Naive thymus-derived CD4-positive, alpha-beta T cell (primary cell): ENCODE measurements at regions of chr14 and their contacts with region 1.

Region 1: DNA sequence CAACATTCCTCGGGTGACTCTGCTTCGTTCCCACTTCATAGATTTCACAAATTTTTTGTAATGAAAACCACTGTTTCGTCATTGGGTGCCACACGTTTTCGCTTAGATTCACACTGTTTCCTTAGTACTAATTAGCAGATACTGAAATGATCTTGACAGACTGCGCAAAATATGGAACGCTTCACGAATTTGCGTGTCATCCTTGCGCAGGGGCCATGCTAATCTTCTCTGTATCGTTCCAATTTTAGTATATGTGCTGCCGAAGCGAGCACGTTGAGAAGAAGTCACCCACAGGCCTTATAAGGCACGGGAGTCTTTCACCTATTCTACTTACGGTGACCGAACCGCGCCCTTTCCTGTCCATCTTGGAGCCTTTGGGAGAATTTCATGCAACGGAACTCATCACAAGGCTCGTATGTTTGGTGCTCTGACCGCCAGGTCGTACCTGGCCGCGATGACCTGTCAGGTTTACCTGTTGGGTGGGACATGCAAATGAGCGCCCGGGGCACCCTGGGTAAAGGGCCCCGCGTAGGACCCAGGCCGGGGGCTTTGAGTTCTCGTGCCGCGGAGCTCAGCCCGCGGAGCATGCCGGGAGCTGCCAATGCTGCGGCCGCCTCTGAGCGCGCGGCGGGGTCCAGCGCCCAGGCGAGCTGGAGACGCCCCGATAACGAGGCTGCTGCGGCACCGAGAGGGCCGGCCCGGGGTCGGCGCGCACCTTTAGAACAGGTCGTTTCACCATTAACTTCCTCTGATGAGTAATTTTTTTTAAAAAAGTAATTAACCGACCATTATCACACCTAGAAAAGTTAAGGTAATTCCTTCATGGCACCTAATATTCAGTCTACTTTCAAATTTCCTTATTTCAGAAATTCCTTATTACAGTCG is at the start of gene RNU6-8:
- DNase-seq: peak; percentile 79 to 96 (median 93)
- ATAC-seq: peak; percentile 91
- H3K4me3 ChIP-seq: peak within 1 kb of the TSS; percentile 85
- H3K4me3 Mint-ChIP-seq: peak within 1 kb of the TSS; percentile 91 to 98 (median 94)
- H3K27ac ChIP-seq: peak within 1 kb of the TSS; percentile 92
- H3K27ac Mint-ChIP-seq: peak within 1 kb of the TSS; percentile 96 to 100 (median 100)
- H3K4me1 ChIP-seq: peaks cover 0 to 9% of the 10 kb centered on the region in 2 donors
- H3K4me1 Mint-ChIP-seq: peaks cover 2 to 46% (median 21%) of the 10 kb centered on the region in 7 donors
- H3K27me3 ChIP-seq: no peaks in the 10 kb centered on the region
- H3K27me3 Mint-ChIP-seq: peaks cover 0 to 30% (median 0%) of the 10 kb centered on the region in 5 donors
- total RNA-seq, gene RNU6-8: not detected

Region 2: GRCh38 chr14:30621940-30622830 is 1581.1 kb before region 1 on chr14 and contains the start of gene SCFD1:
- CTCF ChIA-PET with region 1: no interaction called
- POLR2A ChIA-PET with region 1: no interaction called
- intact Hi-C with region 1: loop called in 1 of 2 experiments (anchors 1 kb)
- DNase-seq: peak; percentile 86 to 94 (median 91)
- ATAC-seq: peak; percentile 99
- H3K4me3 ChIP-seq: peak within 1 kb of the TSS; percentile 97
- H3K4me3 Mint-ChIP-seq: peak within 1 kb of the TSS; percentile 95 to 100 (median 97)
- H3K27ac ChIP-seq: peak within 1 kb of the TSS; percentile 86
- H3K27ac Mint-ChIP-seq: peak within 1 kb of the TSS; percentile 86 to 98 (median 95)
- H3K4me1 ChIP-seq: peaks cover 14 to 26% of the 10 kb centered on the region in 2 donors
- H3K4me1 Mint-ChIP-seq: peaks cover 14 to 58% (median 44%) of the 10 kb centered on the region in 7 donors
- H3K27me3 ChIP-seq: no peaks in the 10 kb centered on the region
- H3K27me3 Mint-ChIP-seq: no peaks in the 10 kb centered on the region
- total RNA-seq, gene SCFD1: 63.2 to 75.4 (median 68.2) TPM

Region 3: DNA sequence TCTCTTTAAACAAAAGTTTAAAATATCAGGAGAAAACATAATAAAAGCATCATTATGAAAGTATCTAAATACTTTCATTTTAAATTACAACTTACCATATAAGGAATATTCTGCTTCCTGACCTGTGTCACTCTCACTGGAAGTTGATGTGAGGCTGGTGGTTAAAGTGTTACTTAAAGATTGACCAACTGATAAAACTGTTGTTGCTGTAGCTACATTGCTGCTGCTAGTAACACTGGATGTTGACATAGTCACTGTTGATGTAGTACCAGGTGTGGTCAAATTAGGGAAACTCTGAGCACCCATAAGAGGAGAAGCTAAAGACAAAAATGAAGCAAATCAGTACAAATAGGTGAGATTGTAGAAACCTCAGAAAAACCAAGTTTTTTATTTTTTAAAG is 1075.5 kb before region 1 on chr14:
- CTCF ChIA-PET with region 1: no interaction called
- POLR2A ChIA-PET with region 1: no interaction called
- intact Hi-C with region 1: loop called in 1 of 2 experiments (anchors 5 kb)
- DNase-seq: peak in 5 of 9 donors; percentile 2 to 42 (median 27)
- ATAC-seq: peak; percentile 91
- H3K4me3 ChIP-seq: no peak overlapping the region
- H3K4me3 Mint-ChIP-seq: peak overlapping the region in 3 of 10 donors; percentile 7 to 67 (median 18)
- H3K27ac ChIP-seq: no peak overlapping the region
- H3K27ac Mint-ChIP-seq: peak overlapping the region in 5 of 9 donors; percentile 11 to 75 (median 52)
- H3K4me1 ChIP-seq: peaks cover 9 to 30% of the 10 kb centered on the region in 2 donors
- H3K4me1 Mint-ChIP-seq: peaks cover 16 to 47% (median 39%) of the 10 kb centered on the region in 7 donors
- H3K27me3 ChIP-seq: no peaks in the 10 kb centered on the region
- H3K27me3 Mint-ChIP-seq: peaks cover 0 to 2% (median 0%) of the 10 kb centered on the region in 5 donors

Region 4: GRCh38 chr14:31456841-31457664 is 746.2 kb before region 1 on chr14 and contains the start of gene DTD2:
- CTCF ChIA-PET with region 1: interaction called, 3 read pairs
- POLR2A ChIA-PET with region 1: interaction called, 6 read pairs
- intact Hi-C with region 1: loop called (anchors 1 kb)
- DNase-seq: peak; percentile 80 to 89 (median 86)
- ATAC-seq: peak; percentile 99
- H3K4me3 ChIP-seq: peak within 1 kb of the TSS; percentile 82
- H3K4me3 Mint-ChIP-seq: peak within 1 kb of the TSS; percentile 92 to 98 (median 96)
- H3K27ac ChIP-seq: peak within 1 kb of the TSS; percentile 77
- H3K27ac Mint-ChIP-seq: peak within 1 kb of the TSS; percentile 89 to 98 (median 95)
- H3K4me1 ChIP-seq: peaks cover 6% of the 10 kb centered on the region in 2 donors
- H3K4me1 Mint-ChIP-seq: peaks cover 14 to 48% (median 40%) of the 10 kb centered on the region in 7 donors
- H3K27me3 ChIP-seq: no peaks in the 10 kb centered on the region
- H3K27me3 Mint-ChIP-seq: peaks cover 0 to 5% (median 0%) of the 10 kb centered on the region in 5 donors
- total RNA-seq, gene DTD2: 13.4 to 20.2 (median 18.6) TPM

Region 5: GRCh38 chr14:31926123-31926522 is 277.1 kb before region 1 on chr14:
- CTCF ChIA-PET with region 1: interaction called, 3 read pairs
- POLR2A ChIA-PET with region 1: interaction called, 5 read pairs
- intact Hi-C with region 1: loop called in 1 of 2 experiments (anchors 2 kb)
- DNase-seq: peak in 7 of 9 donors; percentile 20 to 54 (median 44)
- ATAC-seq: peak; percentile 67
- H3K4me3 ChIP-seq: no peak overlapping the region
- H3K4me3 Mint-ChIP-seq: no peak overlapping the region
- H3K27ac ChIP-seq: no peak overlapping the region
- H3K27ac Mint-ChIP-seq: no peak overlapping the region
- H3K4me1 ChIP-seq: no peaks in the 10 kb centered on the region
- H3K4me1 Mint-ChIP-seq: peaks cover 7 to 18% (median 11%) of the 10 kb centered on the region in 7 donors
- H3K27me3 ChIP-seq: no peaks in the 10 kb centered on the region
- H3K27me3 Mint-ChIP-seq: no peaks in the 10 kb centered on the region

Region 6: GRCh38 chr14:31945074-31945613 is 258.1 kb before region 1 on chr14:
- CTCF ChIA-PET with region 1: no interaction called
- POLR2A ChIA-PET with region 1: interaction called, 4 read pairs
- intact Hi-C with region 1: loop called in 1 of 2 experiments (anchors 1 kb)
- DNase-seq: peak in 8 of 9 donors; percentile 7 to 75 (median 48)
- ATAC-seq: peak; percentile 83
- H3K4me3 ChIP-seq: peak overlapping the region; percentile 29
- H3K4me3 Mint-ChIP-seq: peak overlapping the region in 9 of 10 donors; percentile 30 to 84 (median 71)
- H3K27ac ChIP-seq: peak overlapping the region; percentile 56
- H3K27ac Mint-ChIP-seq: peak overlapping the region; percentile 62 to 94 (median 90)
- H3K4me1 ChIP-seq: peaks cover 10 to 28% of the 10 kb centered on the region in 2 donors
- H3K4me1 Mint-ChIP-seq: peaks cover 21 to 64% (median 33%) of the 10 kb centered on the region in 7 donors
- H3K27me3 ChIP-seq: no peaks in the 10 kb centered on the region
- H3K27me3 Mint-ChIP-seq: peaks cover 0 to 4% (median 0%) of the 10 kb centered on the region in 5 donors

Region 7: GRCh38 chr14:32584079-32584478 is 380.8 kb after region 1 on chr14:
- CTCF ChIA-PET with region 1: no interaction called
- POLR2A ChIA-PET with region 1: no interaction called
- intact Hi-C with region 1: no loop called
- DNase-seq: no peak
- ATAC-seq: no peak
- H3K4me3 ChIP-seq: no peak overlapping the region
- H3K4me3 Mint-ChIP-seq: no peak overlapping the region
- H3K27ac ChIP-seq: no peak overlapping the region
- H3K27ac Mint-ChIP-seq: no peak overlapping the region
- H3K4me1 ChIP-seq: no peaks in the 10 kb centered on the region
- H3K4me1 Mint-ChIP-seq: no peaks in the 10 kb centered on the region
- H3K27me3 ChIP-seq: no peaks in the 10 kb centered on the region
- H3K27me3 Mint-ChIP-seq: peaks cover 0 to 13% (median 4%) of the 10 kb centered on the region in 5 donors